Pancreas (tissue), 10 donors: ENCODE measurements at regions of chr5 and their contacts with region 1.

Region 1: DNA sequence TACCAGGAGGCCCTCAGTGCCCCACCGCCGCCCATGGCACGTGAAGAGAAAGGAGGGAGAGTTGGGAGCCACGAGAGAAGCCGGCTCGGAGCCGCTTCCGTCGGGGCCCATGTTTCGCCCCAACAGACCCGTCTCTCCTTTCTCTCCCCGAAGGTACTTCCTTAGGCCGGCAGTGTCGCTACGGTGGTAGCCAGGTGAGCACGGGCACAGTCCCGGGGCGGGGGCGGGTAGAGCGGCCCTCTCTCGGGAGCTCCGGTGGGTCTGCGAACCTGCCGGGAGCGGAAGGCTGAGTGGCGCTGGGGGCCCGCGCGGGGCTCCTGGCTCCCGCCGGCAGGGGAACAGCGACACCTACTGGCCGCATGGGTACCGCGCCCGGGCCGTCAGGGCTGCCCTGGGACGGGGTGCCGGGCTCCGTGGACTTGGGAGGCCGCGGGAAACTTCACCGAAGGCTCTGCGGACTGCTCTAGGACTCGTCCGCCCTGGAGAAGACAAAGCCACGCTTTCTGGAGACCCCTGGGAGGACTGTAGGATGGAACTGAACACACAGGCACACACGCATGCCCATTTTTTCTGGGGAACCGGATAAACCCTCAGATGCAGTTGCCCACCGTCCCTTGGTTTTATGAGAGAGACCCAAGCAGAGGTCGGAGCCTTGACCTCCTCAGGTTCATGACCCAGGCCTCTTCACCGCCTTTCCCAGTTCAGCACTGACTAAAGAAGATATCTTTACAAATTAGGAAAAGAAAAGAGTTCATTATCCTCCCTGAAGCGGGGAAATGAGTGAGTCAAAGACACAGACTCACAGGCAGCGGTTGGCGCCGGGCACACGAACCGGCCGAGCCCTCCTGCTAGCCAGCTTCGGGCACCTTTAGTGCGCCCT is 202.5 kb downstream of the MEF2C start:
- DNase-seq: peak; percentile 49 to 97 (median 74)
- ATAC-seq: peak; percentile 93 to 97 (median 94)
- H3K4me3 ChIP-seq: peak overlapping the region in 2 of 4 donors; percentile 35 to 42
- H3K27ac ChIP-seq: no peak overlapping the region
- H3K4me1 ChIP-seq: peaks cover 0 to under 1% (median 0%) of the 10 kb centered on the region in 3 donors
- H3K27me3 ChIP-seq: peaks cover 8 to 80% (median 35%) of the 10 kb centered on the region in 4 donors
- CTCF ChIP-seq: peak; percentile 95 to 99 (median 96)

Region 2: GRCh38 chr5:87770601-87771121 is 909.8 kb before region 1 on chr5:
- intact Hi-C with region 1: loop called in 1 of 3 experiments (anchors 10 kb)
- DNase-seq: peak in 1 of 6 donors; percentile 22
- ATAC-seq: no peak
- H3K4me3 ChIP-seq: no peak overlapping the region
- H3K27ac ChIP-seq: no peak overlapping the region
- H3K4me1 ChIP-seq: no peaks in the 10 kb centered on the region
- H3K27me3 ChIP-seq: peaks cover 0 to 30% (median 3%) of the 10 kb centered on the region in 4 donors
- CTCF ChIP-seq: no peak

Region 3: GRCh38 chr5:87780831-87781760 is 899.4 kb before region 1 on chr5:
- intact Hi-C with region 1: loop called in 2 of 3 experiments (anchors 5 to 10 kb)
- DNase-seq: peak; percentile 64 to 80 (median 70)
- ATAC-seq: peak; percentile 94 to 100 (median 100)
- H3K4me3 ChIP-seq: no peak overlapping the region
- H3K27ac ChIP-seq: no peak overlapping the region
- H3K4me1 ChIP-seq: no peaks in the 10 kb centered on the region
- H3K27me3 ChIP-seq: peaks cover 0 to 35% (median 12%) of the 10 kb centered on the region in 4 donors
- CTCF ChIP-seq: peak; percentile 63 to 85 (median 74)

Region 4: DNA sequence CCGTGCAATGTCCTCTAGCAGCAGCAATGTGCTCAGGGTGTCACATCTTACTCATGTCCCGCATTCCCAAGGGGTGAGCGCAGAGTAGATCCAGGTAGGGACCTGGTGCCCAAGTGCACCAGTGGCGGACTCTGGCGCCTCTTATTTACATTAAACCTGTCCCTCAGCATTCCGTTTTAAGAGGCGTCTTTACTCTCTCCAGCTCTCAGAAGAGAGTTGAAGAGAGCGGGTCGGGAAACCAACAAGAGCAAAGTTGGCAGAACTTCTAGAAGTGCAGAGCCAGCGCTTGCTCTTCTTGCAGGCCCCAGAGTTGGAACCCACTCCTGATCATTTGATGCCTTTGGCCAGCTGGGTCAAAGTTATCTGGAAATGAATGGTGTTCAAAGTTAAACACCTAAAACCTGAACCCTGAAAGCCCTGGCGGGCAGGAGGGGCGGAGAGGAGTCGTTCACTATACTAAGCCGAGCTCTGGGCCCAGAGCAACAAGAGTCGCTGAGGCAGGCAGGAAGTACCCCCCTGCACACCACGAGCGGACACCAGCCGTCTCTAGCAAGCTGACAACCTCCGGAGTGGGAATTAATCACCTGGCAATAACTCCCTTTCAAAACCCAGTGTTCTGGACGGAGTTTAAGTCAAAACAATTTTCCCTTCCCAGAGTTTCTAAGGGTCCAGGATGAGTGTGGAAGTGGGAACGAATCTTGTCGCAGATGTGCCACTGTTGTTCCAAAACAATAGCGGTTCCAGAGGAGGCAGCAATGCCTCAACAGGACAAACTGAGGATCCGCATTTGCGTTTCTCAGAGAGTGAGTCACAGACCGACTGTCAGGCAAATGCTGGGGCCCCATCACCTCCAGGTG is 534.7 kb before region 1 on chr5:
- intact Hi-C with region 1: loop called in 1 of 3 experiments (anchors 5 kb)
- DNase-seq: peak in 1 of 6 donors; percentile 31
- ATAC-seq: no peak
- H3K4me3 ChIP-seq: no peak overlapping the region
- H3K27ac ChIP-seq: no peak overlapping the region
- H3K4me1 ChIP-seq: peaks cover 2 to 9% (median 6%) of the 10 kb centered on the region in 3 donors
- H3K27me3 ChIP-seq: peaks cover 0 to 19% (median 5%) of the 10 kb centered on the region in 4 donors
- CTCF ChIP-seq: no peak

Region 5: GRCh38 chr5:88405783-88406182 is 274.7 kb before region 1 on chr5:
- intact Hi-C with region 1: no loop called
- DNase-seq: no peak
- ATAC-seq: no peak
- H3K4me3 ChIP-seq: no peak overlapping the region
- H3K27ac ChIP-seq: no peak overlapping the region
- H3K4me1 ChIP-seq: no peaks in the 10 kb centered on the region
- H3K27me3 ChIP-seq: no peaks in the 10 kb centered on the region
- CTCF ChIP-seq: no peak

Region 6: DNA sequence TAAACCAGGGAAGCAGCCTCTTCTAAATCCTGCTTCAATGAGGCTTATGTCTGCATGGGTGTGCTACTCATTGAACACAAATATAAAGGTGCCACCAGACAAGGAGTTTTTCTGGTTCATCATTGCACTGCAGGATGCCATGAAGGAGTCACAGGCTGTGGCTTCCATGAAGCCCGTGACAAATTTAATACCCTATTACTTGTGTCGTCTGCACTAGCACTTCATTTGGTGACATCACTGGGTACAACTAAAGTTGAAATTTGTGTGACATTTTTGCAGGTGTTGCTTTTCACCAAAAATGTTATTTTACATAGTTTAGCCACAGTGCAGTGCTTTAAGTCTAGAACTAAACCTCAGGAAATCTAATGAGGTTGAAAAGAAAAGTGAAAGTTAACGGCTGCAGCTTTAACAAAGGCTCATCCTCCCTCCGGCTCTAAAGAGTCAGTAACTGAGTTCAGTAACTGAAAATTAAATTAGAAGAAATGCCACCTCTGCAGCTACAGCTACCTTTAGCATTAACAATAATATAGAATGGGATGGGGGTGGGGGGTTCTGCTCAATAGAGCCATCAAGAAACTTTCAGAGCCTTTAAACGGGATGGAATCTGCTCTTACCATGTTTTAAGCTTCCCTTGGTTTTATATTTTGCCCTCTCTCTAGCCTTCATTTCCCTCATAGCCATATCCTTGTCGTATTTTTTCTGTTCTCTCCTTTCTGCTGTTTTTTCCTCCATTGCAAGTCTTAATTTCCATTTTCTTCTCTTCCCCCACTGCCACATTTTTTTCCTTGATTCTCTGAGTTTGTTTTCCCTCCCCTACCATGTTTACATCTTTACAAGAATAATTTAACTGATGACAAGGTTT is 178.1 kb before region 1 on chr5:
- intact Hi-C with region 1: no loop called
- DNase-seq: no peak
- ATAC-seq: peak in 1 of 4 donors; percentile 32
- H3K4me3 ChIP-seq: peak overlapping the region in 2 of 4 donors; percentile 2 to 31
- H3K27ac ChIP-seq: no peak overlapping the region
- H3K4me1 ChIP-seq: no peaks in the 10 kb centered on the region
- H3K27me3 ChIP-seq: no peaks in the 10 kb centered on the region
- CTCF ChIP-seq: no peak